Endothelial cell of umbilical vein (primary cell): ENCODE measurements at regions of chr3 and their contacts with region 1.

Region 1: GRCh38 chr3:192816351-192816750 is 89.0 kb upstream of the FGF12 start:
- DNase-seq: peak; percentile 68
- H3K4me3 ChIP-seq: no peak overlapping the region
- H3K27ac ChIP-seq: no peak overlapping the region
- H3K4me1 ChIP-seq: peaks cover 29% of the 10 kb centered on the region
- H3K27me3 ChIP-seq: no peaks in the 10 kb centered on the region
- CTCF ChIP-seq: peak; percentile 38 to 51
- POLR2A ChIP-seq: no peak

Region 2: GRCh38 chr3:192851821-192852424 is 35.6 kb after region 1 on chr3:
- CTCF ChIA-PET with region 1: interaction called, 4 read pairs
- POLR2A ChIA-PET with region 1: no interaction called
- dilution Hi-C with region 1: no loop called
- intact Hi-C with region 1: loop called (anchors 1 kb)
- DNase-seq: peak; percentile 92
- H3K4me3 ChIP-seq: no peak overlapping the region
- H3K27ac ChIP-seq: no peak overlapping the region
- H3K4me1 ChIP-seq: peaks cover 33% of the 10 kb centered on the region
- H3K27me3 ChIP-seq: no peaks in the 10 kb centered on the region
- CTCF ChIP-seq: no peak
- POLR2A ChIP-seq: no peak

Region 3: GRCh38 chr3:192957441-192958021 is 141.2 kb after region 1 on chr3:
- CTCF ChIA-PET with region 1: interaction called, 6 read pairs
- POLR2A ChIA-PET with region 1: no interaction called
- dilution Hi-C with region 1: no loop called
- intact Hi-C with region 1: loop called (anchors 1 kb)
- DNase-seq: peak; percentile 90
- H3K4me3 ChIP-seq: peak overlapping the region in 1 of 3 experiments; percentile 24
- H3K27ac ChIP-seq: peak overlapping the region; percentile 92
- H3K4me1 ChIP-seq: peaks cover 21% of the 10 kb centered on the region
- H3K27me3 ChIP-seq: no peaks in the 10 kb centered on the region
- CTCF ChIP-seq: no peak
- POLR2A ChIP-seq: no peak

Region 4: DNA sequence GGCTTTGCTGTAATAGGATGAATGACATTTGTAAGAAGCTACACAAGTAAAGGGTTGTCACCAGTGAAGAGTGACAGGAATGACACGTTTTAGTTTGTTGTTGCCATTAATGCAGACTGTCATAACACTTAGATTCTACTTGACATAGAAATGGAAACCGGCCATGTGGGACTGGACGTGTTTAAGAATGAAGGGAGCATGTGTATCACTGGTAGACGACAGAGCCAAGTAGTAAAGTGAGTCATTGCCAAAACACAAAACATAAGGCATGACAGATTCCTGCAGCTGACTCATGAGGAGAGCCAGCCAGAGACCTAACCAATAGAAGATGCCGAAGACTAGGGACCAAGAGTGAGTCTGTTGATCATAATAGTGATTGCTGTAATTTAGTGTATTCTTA is 318.5 kb after region 1 on chr3:
- CTCF ChIA-PET with region 1: interaction called, 10 read pairs
- POLR2A ChIA-PET with region 1: no interaction called
- dilution Hi-C with region 1: no loop called
- intact Hi-C with region 1: loop called (anchors 5 kb)
- DNase-seq: peak; percentile 49
- H3K4me3 ChIP-seq: no peak overlapping the region
- H3K27ac ChIP-seq: no peak overlapping the region
- H3K4me1 ChIP-seq: no peaks in the 10 kb centered on the region
- H3K27me3 ChIP-seq: peaks cover 0 to 6% of the 10 kb centered on the region in 2 experiments
- CTCF ChIP-seq: no peak
- POLR2A ChIP-seq: no peak

Region 5: DNA sequence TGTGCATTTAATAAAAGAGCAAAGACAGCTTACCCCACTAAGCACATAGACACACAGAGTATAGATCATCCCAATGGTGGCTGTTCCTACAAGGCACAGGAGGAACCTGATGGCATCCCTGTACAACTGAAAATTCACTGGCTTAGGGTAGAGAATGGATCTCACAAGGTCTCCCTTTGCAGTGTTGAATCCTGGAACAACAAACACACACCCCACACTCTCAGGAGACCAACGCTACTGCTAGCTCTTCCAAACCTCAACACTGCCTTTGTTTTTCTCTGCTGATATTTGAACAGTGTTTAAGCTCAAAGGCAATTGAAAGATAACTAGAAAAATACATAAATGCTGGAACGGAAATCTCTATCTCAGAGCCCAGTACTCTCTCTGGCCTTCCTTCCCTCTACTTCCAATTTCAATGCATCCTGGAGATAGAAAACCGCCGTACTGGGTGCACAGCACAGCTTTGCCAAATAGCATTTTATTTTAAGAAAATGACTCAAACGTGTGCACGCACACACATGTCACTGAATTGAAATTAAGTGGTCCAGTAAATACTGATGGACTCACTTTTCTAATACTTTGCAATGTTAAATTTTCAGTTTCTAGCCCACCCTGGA is 649.7 kb after region 1 on chr3:
- CTCF ChIA-PET with region 1: interaction called, 14 read pairs
- POLR2A ChIA-PET with region 1: no interaction called
- dilution Hi-C with region 1: no loop called
- intact Hi-C with region 1: loop called (anchors 2 kb)
- DNase-seq: no peak
- H3K4me3 ChIP-seq: no peak overlapping the region
- H3K27ac ChIP-seq: no peak overlapping the region
- H3K4me1 ChIP-seq: peaks cover 5% of the 10 kb centered on the region
- H3K27me3 ChIP-seq: peaks cover 0 to 2% of the 10 kb centered on the region in 2 experiments
- CTCF ChIP-seq: no peak
- POLR2A ChIP-seq: no peak

Region 6: DNA sequence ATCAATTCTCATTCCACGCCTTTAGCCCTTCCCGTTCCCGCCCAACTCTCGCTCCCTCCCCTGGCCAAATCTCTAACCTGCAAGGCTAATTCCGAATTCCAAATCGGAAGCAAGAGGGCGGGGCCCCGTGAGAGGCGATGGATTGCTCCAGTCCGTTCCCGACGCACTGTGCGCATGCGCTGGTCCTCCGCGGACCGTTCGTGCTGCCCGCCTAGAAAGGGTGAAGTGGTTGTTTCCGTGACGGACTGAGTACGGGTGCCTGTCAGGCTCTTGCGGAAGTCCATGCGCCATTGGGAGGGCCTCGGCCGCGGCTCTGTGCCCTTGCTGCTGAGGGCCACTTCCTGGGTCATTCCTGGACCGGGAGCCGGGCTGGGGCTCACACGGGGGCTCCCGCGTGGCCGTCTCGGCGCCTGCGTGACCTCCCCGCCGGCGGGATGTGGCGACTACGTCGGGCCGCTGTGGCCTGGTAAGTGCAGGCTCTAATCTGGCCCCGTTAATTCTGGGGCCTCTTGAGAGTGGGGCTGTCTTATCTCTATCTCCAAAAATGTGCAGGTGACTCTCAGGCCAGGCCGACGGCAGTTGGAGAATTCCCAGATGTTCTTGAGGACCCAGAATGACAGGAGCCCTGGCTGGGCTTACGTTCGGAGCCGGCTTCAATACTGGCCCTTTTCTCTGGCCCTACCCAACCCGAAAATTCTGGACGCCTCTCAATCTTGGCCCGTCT is 776.8 kb after region 1 on chr3 and contains the start of gene OPA1:
- CTCF ChIA-PET with region 1: interaction called, 6 read pairs
- POLR2A ChIA-PET with region 1: no interaction called
- dilution Hi-C with region 1: no loop called
- intact Hi-C with region 1: loop called (anchors 5 kb)
- DNase-seq: peak; percentile 98
- H3K4me3 ChIP-seq: peak within 1 kb of the TSS; percentile 56 to 94 (median 85)
- H3K27ac ChIP-seq: peak within 1 kb of the TSS; percentile 80
- H3K4me1 ChIP-seq: peaks cover 18% of the 10 kb centered on the region
- H3K27me3 ChIP-seq: no peaks in the 10 kb centered on the region
- CTCF ChIP-seq: peak in 1 of 2 donors; percentile 24
- POLR2A ChIP-seq: peak; percentile 75
- total RNA-seq, gene OPA1: 57.8 and 62.0 TPM in 2 replicates